A673 (cell line): ENCODE measurements at regions of chr5 and their contacts with region 1.

Region 1: DNA sequence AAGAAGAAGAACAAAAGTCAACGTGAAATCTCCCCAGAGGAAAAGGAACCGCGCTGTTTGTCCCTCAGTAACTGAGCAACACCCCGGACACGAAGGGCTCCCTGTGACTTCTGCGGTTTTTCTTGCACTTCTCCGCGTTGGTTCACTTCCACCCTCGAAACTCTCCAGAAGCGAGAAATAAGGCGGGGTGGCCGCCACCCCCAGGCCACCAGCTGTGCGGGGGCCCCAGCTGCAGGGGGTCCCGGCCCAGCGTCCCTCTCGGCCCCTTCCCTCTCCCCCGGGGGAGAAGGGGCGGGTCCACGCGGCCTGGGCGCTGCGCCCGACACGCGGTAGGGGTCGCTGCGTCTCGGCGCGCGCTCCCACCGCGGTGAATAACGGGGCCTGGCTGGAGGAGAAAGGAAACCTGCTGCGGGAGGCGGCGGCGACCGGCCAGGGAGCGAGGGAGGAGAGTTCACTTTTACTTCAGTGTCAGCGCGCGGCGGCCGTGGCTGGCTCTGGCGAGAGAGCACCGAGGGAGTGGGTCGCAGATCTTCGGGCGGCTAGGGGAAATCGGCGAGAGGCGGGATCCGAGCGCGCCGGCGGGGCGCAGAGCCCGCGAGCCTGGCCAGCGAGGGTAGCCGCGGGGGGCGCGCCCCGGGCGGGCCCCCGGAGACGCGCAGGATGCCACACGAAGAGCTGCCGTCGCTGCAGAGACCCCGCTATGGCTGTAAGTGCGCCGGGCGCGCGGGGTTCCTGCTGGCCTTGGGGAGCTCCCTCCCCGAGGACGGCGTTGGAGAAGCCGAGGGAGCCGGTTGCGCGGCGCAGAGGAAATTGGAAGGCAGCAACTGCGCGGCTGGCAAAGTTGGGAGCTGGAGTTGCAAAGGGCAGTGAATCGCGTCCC is at the start of gene IQGAP2:
- DNase-seq: peak; percentile 90
- H3K4me3 ChIP-seq: peak within 1 kb of the TSS; percentile 89
- H3K27ac ChIP-seq: peak within 1 kb of the TSS; percentile 87
- H3K4me1 ChIP-seq: peaks cover 25% of the 10 kb centered on the region
- H3K27me3 ChIP-seq: no peaks in the 10 kb centered on the region
- CTCF ChIP-seq: peak; percentile 85
- total RNA-seq, gene IQGAP2: 26.8 and 34.0 TPM in 2 replicates

Region 2: DNA sequence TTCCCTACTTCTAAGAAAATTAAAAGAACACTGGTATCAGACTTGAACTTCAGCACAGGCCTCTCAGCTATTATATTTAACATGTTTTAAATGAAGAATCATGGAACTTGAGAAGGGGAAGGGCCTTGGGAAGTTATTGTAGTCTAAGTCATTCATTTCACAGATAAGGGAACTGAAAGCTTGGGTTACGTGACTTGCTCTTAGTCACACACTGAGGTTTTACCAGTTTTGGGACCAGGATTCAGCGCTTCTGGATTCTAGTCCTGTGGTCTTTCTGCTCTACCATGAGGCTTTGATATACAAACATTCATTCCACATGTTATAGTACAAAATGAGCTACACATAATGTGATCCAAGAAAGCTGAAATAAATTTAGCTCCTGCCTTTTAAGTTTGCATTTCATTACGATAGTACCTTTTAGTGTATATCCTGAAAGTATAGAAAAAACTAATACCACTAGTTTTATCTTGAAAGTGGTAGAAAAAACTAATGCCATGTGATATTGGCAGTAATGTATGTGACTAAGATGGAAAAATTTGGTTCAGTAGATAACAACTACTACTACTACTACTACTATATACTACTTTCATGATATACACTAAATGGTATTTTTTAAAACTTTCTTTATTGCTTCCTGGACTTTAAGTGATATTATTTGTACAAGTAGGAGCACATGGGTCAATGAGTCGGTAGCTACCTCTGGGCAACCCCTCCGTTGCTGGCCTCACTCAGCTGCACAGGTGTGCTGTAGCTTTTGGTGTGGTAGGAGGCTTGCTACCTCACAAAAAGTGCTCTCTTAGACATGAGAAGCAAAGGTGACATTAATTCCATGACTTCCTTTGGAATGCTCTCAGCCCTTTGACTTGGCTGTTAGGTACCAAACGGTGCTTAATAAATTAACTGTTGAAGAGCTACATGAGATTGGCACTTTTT is 179.4 kb after region 1 on chr5:
- CTCF ChIA-PET with region 1: interaction called, 18 read pairs
- POLR2A ChIA-PET with region 1: no interaction called
- intact Hi-C with region 1: no loop called
- DNase-seq: no peak
- H3K4me3 ChIP-seq: no peak overlapping the region
- H3K27ac ChIP-seq: no peak overlapping the region
- H3K4me1 ChIP-seq: peaks cover 5% of the 10 kb centered on the region
- H3K27me3 ChIP-seq: no peaks in the 10 kb centered on the region
- CTCF ChIP-seq: no peak